ENCODE measurements at regions of chr12 and their contacts with region 1.

Region 1: GRCh38 chr12:114848666-114849065 is 164.7 kb upstream of the TBX3 start:
- DNase-seq: peak in 1 of 2 experiments; percentile 44
- ATAC-seq: peak; percentile 50 to 59; a peak in 5 of 6 replicates
- H3K4me3 ChIP-seq: no peak overlapping the region
- H3K27ac ChIP-seq: peak overlapping the region in 1 of 2 experiments; percentile 47; a peak in 1 of 6 replicates
- H3K4me1 ChIP-seq: 0 out of 3 replicates have a peak, but pooled peaks cover 3% of the 10 kb centered on the region
- CTCF ChIP-seq: no peak
- EP300 ChIP-seq: no peak
- POLR2A ChIP-seq: no peak
- RAD21 ChIP-seq: no peak

Region 2: GRCh38 chr12:114817571-114818425 is 30.9 kb before region 1 on chr12:
- CTCF ChIA-PET with region 1: no interaction called
- POLR2A ChIA-PET with region 1: no interaction called
- DNase-seq: no peak
- ATAC-seq: no peak
- H3K4me3 ChIP-seq: no peak overlapping the region
- H3K27ac ChIP-seq: no peak overlapping the region
- H3K4me1 ChIP-seq: peaks cover 8% of the 10 kb centered on the region
- CTCF ChIP-seq: no peak
- EP300 ChIP-seq: no peak
- POLR2A ChIP-seq: no peak
- RAD21 ChIP-seq: no peak

Region 3: GRCh38 chr12:115354007-115354452 is 505.4 kb after region 1 on chr12:
- CTCF ChIA-PET with region 1: no interaction called
- POLR2A ChIA-PET with region 1: interaction called, 10 read pairs
- DNase-seq: peak; percentile 68 to 85
- ATAC-seq: peak; percentile 97
- H3K4me3 ChIP-seq: peak overlapping the region; percentile 38
- H3K27ac ChIP-seq: peak overlapping the region; percentile 87 to 91
- H3K4me1 ChIP-seq: peaks cover 13% of the 10 kb centered on the region
- CTCF ChIP-seq: no peak
- EP300 ChIP-seq: no peak
- POLR2A ChIP-seq: peak; percentile 37
- RAD21 ChIP-seq: peak; percentile 3 to 39; a peak in 2 of 5 replicates

Measured in A549 (cell line).